CD4-positive, alpha-beta T cell (primary cell): ENCODE measurements at regions of chr15 and their contacts with region 1.

Region 1: GRCh38 chr15:22262613-22263020 is 182.3 kb downstream of the OR4M2 start:
- DNase-seq: peak in 10 of 14 experiments; percentile 10 to 82 (median 46)
- ATAC-seq: peak; percentile 45
- H3K4me3 ChIP-seq: peak overlapping the region; percentile 33
- H3K4me3 Mint-ChIP-seq: no peak overlapping the region
- H3K27ac ChIP-seq: peak overlapping the region in 1 of 2 donors; percentile 2
- H3K27ac Mint-ChIP-seq: no peak overlapping the region
- H3K4me1 ChIP-seq: peaks cover 52% of the 10 kb centered on the region
- H3K4me1 Mint-ChIP-seq: peaks cover 27% of the 10 kb centered on the region
- H3K27me3 ChIP-seq: peaks cover 3 to 4% of the 10 kb centered on the region in 2 experiments
- H3K27me3 Mint-ChIP-seq: peaks cover 27% of the 10 kb centered on the region
- CTCF ChIP-seq: no peak

Region 2: GRCh38 chr15:22229971-22230815 is 32.4 kb before region 1 on chr15:
- CTCF ChIA-PET with region 1: no interaction called
- POLR2A ChIA-PET with region 1: interaction called, 3 read pairs
- intact Hi-C with region 1: loop called in 1 of 2 experiments (anchors 5 kb)
- DNase-seq: peak in 2 of 14 experiments; percentile 4 to 31
- ATAC-seq: no peak
- H3K4me3 ChIP-seq: no peak overlapping the region
- H3K4me3 Mint-ChIP-seq: no peak overlapping the region
- H3K27ac ChIP-seq: no peak overlapping the region
- H3K27ac Mint-ChIP-seq: no peak overlapping the region
- H3K4me1 ChIP-seq: no peaks in the 10 kb centered on the region
- H3K4me1 Mint-ChIP-seq: no peaks in the 10 kb centered on the region
- H3K27me3 ChIP-seq: no peaks in the 10 kb centered on the region
- H3K27me3 Mint-ChIP-seq: no peaks in the 10 kb centered on the region
- CTCF ChIP-seq: no peak

Region 3: DNA sequence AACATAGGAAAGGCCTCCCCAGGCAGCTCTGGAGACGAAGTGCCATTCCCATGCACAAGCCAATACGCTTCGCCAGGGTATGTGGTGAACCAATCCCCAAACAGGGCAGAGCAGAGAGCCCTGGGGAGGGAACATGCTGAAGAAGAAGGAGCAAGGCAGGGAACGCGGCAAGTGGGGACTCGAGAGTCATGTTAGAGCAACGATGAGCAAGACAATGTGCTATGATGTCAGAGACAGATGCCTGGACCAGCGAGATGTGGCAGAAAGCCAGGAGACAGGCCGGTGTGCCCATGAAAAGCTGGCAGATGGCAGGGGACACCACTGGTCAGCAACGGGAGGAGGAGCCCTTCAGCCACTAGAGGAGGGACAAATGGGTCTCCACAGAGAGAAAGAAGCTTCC is 615.5 kb after region 1 on chr15:
- CTCF ChIA-PET with region 1: no interaction called
- POLR2A ChIA-PET with region 1: no interaction called
- intact Hi-C with region 1: no loop called
- DNase-seq: no peak
- ATAC-seq: no peak
- H3K4me3 ChIP-seq: no peak overlapping the region
- H3K4me3 Mint-ChIP-seq: no peak overlapping the region
- H3K27ac ChIP-seq: no peak overlapping the region
- H3K27ac Mint-ChIP-seq: no peak overlapping the region
- H3K4me1 ChIP-seq: no peaks in the 10 kb centered on the region
- H3K4me1 Mint-ChIP-seq: no peaks in the 10 kb centered on the region
- H3K27me3 ChIP-seq: no peaks in the 10 kb centered on the region
- H3K27me3 Mint-ChIP-seq: no peaks in the 10 kb centered on the region
- CTCF ChIP-seq: no peak